Endothelial cell of umbilical vein (primary cell): ENCODE measurements at regions of chr14 and their contacts with region 1.

Region 1: DNA sequence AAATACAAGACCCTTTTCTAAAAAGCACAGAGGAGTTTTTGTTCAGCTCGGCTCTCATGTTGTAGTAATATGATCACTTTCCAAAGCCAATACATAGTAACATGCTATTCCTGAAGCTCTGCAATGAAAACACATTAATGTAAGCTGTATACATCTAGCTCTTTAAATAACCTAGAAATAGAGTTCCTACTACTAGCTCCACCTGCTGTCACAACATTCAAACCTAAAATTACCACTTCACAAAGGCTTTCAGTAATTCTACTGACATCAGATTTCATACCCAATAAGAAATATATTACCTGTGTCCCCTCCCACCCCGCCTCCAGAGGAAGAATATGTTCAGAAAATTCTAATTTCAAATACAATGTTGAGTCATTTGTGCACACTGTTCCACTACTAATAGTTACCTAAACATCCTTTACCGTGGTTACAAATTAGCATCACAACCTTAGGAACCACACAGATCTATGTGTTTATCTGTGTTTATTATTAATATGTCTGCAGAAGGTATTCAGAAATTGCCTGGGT is 17.8 kb downstream of the EFCAB11 start:
- DNase-seq: no peak
- H3K4me3 ChIP-seq: no peak overlapping the region
- H3K27ac ChIP-seq: no peak overlapping the region
- H3K4me1 ChIP-seq: peaks cover under 1% of the 10 kb centered on the region
- H3K27me3 ChIP-seq: no peaks in the 10 kb centered on the region
- CTCF ChIP-seq: no peak
- POLR2A ChIP-seq: no peak

Region 2: GRCh38 chr14:89027097-89027740 is 909.5 kb before region 1 on chr14:
- CTCF ChIA-PET with region 1: interaction called, 45 read pairs
- POLR2A ChIA-PET with region 1: no interaction called
- dilution Hi-C with region 1: no loop called
- intact Hi-C with region 1: no loop called
- DNase-seq: peak; percentile 25
- H3K4me3 ChIP-seq: peak overlapping the region; percentile 40 to 65 (median 56)
- H3K27ac ChIP-seq: no peak overlapping the region
- H3K4me1 ChIP-seq: peaks cover 9% of the 10 kb centered on the region
- H3K27me3 ChIP-seq: peaks cover 25 to 39% of the 10 kb centered on the region in 2 experiments
- CTCF ChIP-seq: peak; percentile 74 to 88
- POLR2A ChIP-seq: no peak

Region 3: DNA sequence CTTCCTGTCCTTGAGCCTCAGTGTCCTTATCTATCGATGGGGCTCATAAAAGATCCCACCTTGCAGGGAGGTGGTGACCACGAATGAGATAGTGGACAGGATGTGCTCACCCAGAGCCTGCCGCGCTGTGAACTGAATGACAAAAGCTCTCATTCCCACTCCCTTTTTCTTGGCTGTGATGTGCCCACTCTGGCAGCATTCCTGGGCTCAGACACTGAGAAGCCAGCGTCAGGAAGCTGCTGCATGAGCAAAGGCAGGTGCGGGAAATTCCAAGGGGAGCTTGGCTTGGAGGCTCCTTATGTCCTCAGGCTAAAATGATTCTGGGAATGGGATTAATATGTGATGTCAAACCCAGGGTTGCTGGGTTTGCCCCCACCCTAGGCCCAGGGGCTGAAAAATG is 43.8 kb before region 1 on chr14:
- CTCF ChIA-PET with region 1: no interaction called
- POLR2A ChIA-PET with region 1: no interaction called
- dilution Hi-C with region 1: no loop called
- intact Hi-C with region 1: no loop called
- DNase-seq: no peak
- H3K4me3 ChIP-seq: no peak overlapping the region
- H3K27ac ChIP-seq: no peak overlapping the region
- H3K4me1 ChIP-seq: no peaks in the 10 kb centered on the region
- H3K27me3 ChIP-seq: no peaks in the 10 kb centered on the region
- CTCF ChIP-seq: no peak
- POLR2A ChIP-seq: no peak

Region 4: DNA sequence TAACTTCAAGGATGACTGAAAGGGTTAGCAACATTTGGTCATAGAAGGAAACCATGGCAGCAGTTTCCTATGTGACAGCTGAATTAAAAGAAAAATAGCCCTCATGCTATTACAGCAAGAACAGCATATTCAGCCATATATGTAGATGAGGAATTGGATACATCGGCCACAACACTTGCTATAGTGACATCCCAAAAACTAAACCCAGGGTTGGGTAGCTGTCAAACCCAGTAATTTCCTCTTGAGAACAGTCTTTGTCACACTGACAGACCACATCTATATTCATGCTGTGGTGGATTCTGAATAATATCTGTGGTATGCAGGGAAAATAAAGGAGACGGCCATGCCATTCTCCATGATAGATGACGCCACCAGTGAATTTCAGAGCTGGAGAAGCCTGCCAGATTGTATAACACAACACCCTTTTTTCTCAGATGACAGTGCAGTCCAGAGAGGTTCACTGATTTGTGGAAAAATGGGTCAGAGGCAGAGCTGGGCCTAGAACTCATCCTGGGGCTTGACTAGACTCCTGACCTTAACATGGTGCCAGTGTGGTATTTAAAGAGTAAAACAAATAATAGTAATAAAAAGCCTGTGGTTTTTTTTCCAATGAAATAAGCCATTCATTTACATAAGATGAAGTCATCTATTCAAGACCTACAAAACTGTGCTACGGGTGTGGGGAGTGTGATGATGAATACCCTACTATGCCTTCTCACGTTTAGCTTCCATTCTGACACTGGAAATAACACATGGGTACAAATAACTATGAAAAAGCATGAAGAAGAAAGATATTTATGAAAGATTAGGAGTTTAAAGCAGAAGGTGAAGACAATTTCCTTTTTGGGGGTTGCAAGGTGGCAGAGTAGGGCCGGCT is 14.5 kb before region 1 on chr14:
- CTCF ChIA-PET with region 1: interaction called, 64 read pairs
- POLR2A ChIA-PET with region 1: no interaction called
- dilution Hi-C with region 1: no loop called
- intact Hi-C with region 1: no loop called
- DNase-seq: no peak
- H3K4me3 ChIP-seq: no peak overlapping the region
- H3K27ac ChIP-seq: peak overlapping the region; percentile 49
- H3K4me1 ChIP-seq: peaks cover 23% of the 10 kb centered on the region
- H3K27me3 ChIP-seq: no peaks in the 10 kb centered on the region
- CTCF ChIP-seq: no peak
- POLR2A ChIP-seq: no peak

Region 5: DNA sequence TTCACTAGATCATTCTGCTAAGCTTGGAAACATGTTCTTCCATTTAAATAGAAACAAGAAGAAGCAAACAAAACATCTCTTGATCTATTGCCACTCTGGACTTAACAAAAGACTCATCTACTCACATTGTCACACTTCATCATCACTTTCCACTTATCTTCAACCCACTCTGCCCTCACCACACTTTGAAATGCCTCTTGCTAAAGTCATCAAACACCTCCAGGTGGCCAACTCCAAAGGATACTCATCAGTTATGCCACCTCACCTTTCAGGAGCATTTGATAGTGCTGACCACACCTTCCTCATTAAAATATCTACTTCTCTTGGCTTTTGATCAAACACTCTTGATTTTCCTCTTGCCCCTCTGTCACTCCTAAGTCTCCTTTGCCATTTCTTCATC is 10.6 kb after region 1 on chr14:
- CTCF ChIA-PET with region 1: interaction called, 93 read pairs
- POLR2A ChIA-PET with region 1: no interaction called
- dilution Hi-C with region 1: no loop called
- intact Hi-C with region 1: no loop called
- DNase-seq: no peak
- H3K4me3 ChIP-seq: no peak overlapping the region
- H3K27ac ChIP-seq: no peak overlapping the region
- H3K4me1 ChIP-seq: no peaks in the 10 kb centered on the region
- H3K27me3 ChIP-seq: no peaks in the 10 kb centered on the region
- CTCF ChIP-seq: no peak
- POLR2A ChIP-seq: no peak

Region 6: GRCh38 chr14:89959853-89960445 is 23.2 kb after region 1 on chr14:
- CTCF ChIA-PET with region 1: interaction called, 93 read pairs
- POLR2A ChIA-PET with region 1: interaction called, 4 read pairs
- dilution Hi-C with region 1: no loop called
- intact Hi-C with region 1: no loop called
- DNase-seq: no peak
- H3K4me3 ChIP-seq: no peak overlapping the region
- H3K27ac ChIP-seq: no peak overlapping the region
- H3K4me1 ChIP-seq: peaks cover 28% of the 10 kb centered on the region
- H3K27me3 ChIP-seq: no peaks in the 10 kb centered on the region
- CTCF ChIP-seq: no peak
- POLR2A ChIP-seq: no peak